ENCODE measurements at regions of chr1 and their contacts with region 1.

Region 1: DNA sequence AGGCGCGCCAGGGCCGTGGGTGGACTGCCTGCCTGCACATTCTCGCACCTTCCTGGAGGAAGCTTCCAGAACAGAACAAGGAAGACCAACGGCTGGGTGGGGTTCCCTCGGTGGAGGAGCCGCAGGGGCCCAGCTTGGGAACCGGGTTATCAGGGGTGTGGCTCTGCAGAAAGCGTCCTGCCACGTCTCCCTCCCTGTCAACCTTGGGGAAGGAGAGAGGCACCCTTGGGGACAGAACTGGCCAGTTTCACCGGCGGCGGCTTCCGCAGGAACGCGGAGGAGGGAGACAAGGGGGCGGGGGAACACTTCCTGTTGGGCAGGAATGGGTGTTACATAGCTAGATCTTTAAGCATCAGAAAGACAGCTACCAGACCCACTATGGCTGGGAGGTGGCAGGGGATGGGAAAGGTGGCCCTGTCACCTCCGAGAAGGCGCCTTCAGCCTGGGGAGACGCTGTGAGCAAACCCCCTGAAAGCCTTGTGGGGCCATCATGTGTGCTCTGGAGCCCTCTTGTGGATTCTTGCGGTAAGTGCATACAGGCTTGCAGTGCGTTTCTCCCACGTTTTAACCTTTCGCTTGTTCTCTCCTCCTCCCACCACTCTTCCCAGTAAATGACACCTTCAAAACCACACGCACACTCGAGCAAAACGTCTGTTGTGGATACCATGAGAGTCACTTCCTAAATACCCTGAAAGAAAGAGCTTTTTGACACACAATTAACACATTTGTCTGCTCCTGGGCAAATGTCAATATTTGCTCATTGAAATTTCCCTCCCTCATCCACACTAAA is 3.8 kb upstream of the PLEKHA6 start:
- DNase-seq: peak; percentile 60 to 82 (median 72)
- H3K4me3 ChIP-seq: peak overlapping the region; percentile 69
- H3K4me3 Mint-ChIP-seq: peak overlapping the region; percentile 22 to 91 (median 80)
- H3K27ac ChIP-seq: peak overlapping the region; percentile 32
- H3K27ac Mint-ChIP-seq: peak overlapping the region in 7 of 8 donors; percentile 49 to 96 (median 88)
- H3K4me1 ChIP-seq: peaks cover 10% of the 10 kb centered on the region
- H3K4me1 Mint-ChIP-seq: peaks cover 2 to 8% (median 6%) of the 10 kb centered on the region in 3 donors
- H3K27me3 ChIP-seq: no peaks in the 10 kb centered on the region
- H3K27me3 Mint-ChIP-seq: peaks cover 2 to 5% of the 10 kb centered on the region in 2 donors

Region 2: DNA sequence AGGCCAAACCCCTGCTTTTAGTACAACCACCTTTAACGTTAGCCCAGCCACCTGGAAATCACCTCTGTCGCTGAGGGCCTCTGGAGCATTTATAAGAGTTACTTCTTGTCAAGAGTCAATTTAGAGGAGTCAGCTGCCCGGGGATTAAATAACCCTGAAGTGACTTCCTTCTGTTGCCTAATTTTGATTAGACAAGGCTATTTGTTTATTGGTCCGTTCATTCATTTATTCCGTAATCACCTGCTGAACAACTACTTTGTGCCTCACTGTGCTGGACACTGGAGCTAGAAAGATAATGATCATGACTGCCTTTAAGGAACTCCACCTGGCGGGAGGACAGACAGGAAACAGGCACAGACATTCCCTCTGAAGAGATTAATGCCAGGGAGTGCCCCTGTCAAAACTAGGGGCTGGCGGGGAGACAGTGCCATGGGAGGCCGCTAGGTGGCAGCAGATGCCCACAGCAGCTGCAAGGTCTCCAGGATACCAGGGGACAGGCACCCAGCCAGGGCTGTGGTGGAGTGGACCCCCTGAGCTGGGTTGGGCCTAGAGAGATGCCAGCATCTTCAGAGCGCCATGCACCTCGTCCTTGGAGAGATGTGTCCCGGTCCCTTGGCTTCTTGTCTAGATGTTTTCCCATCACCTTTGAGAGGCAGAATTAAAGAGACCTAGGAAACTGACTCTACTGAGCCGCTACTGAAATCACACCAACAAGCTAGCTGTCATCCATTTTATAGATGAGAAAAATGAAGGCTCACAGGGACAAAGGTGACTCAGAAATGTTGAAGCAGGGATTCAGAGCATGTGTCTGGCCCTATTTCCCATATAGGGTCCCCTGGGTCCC is 201.1 kb before region 1 on chr1:
- CTCF ChIA-PET with region 1: interaction called, 80 read pairs
- POLR2A ChIA-PET with region 1: no interaction called
- DNase-seq: peak; percentile 63 to 80 (median 72)
- H3K4me3 ChIP-seq: no peak overlapping the region
- H3K4me3 Mint-ChIP-seq: no peak overlapping the region
- H3K27ac ChIP-seq: no peak overlapping the region
- H3K27ac Mint-ChIP-seq: no peak overlapping the region
- H3K4me1 ChIP-seq: no peaks in the 10 kb centered on the region
- H3K4me1 Mint-ChIP-seq: no peaks in the 10 kb centered on the region
- H3K27me3 ChIP-seq: no peaks in the 10 kb centered on the region
- H3K27me3 Mint-ChIP-seq: peaks cover 11 to 24% of the 10 kb centered on the region in 2 donors

Region 3: DNA sequence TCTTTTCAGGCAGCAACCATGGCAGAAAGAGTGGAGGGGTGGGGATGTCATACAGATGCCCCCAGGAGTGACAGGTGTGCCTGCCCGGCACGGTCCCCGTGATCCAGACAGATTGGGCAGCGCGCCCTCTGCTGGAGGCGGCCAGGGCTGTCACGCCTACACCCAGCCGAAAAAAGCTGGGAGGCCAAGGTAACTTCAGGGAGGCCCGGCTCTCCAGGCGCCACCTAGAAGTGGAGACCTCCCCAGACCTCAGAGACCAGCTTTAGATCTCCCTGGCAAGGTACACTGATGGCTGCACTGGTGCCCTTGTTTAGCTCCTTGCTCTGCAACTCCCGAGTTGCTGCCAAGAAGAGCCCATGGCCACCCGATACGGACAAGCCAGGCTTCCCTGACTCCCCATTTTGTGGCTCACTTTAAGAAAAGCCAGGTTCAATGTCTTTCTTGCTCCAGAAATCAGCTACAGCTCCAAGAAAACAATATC is 156.4 kb before region 1 on chr1:
- CTCF ChIA-PET with region 1: interaction called, 14 read pairs
- POLR2A ChIA-PET with region 1: no interaction called
- DNase-seq: peak; percentile 50 to 70 (median 61)
- H3K4me3 ChIP-seq: no peak overlapping the region
- H3K4me3 Mint-ChIP-seq: no peak overlapping the region
- H3K27ac ChIP-seq: no peak overlapping the region
- H3K27ac Mint-ChIP-seq: no peak overlapping the region
- H3K4me1 ChIP-seq: peaks cover 5% of the 10 kb centered on the region
- H3K4me1 Mint-ChIP-seq: peaks cover 0 to 4% (median 0%) of the 10 kb centered on the region in 3 donors
- H3K27me3 ChIP-seq: peaks cover 3% of the 10 kb centered on the region
- H3K27me3 Mint-ChIP-seq: peaks cover 32 to 69% of the 10 kb centered on the region in 2 donors

Region 4: GRCh38 chr1:204257954-204258752 is 105.4 kb before region 1 on chr1:
- CTCF ChIA-PET with region 1: interaction called, 13 read pairs
- POLR2A ChIA-PET with region 1: no interaction called
- DNase-seq: no peak
- H3K4me3 ChIP-seq: no peak overlapping the region
- H3K4me3 Mint-ChIP-seq: no peak overlapping the region
- H3K27ac ChIP-seq: no peak overlapping the region
- H3K27ac Mint-ChIP-seq: no peak overlapping the region
- H3K4me1 ChIP-seq: no peaks in the 10 kb centered on the region
- H3K4me1 Mint-ChIP-seq: no peaks in the 10 kb centered on the region
- H3K27me3 ChIP-seq: no peaks in the 10 kb centered on the region
- H3K27me3 Mint-ChIP-seq: peaks cover 1 to 8% of the 10 kb centered on the region in 2 donors

Region 5: GRCh38 chr1:204350857-204351573 is 12.5 kb before region 1 on chr1:
- CTCF ChIA-PET with region 1: interaction called, 10 read pairs
- POLR2A ChIA-PET with region 1: no interaction called
- DNase-seq: no peak
- H3K4me3 ChIP-seq: no peak overlapping the region
- H3K4me3 Mint-ChIP-seq: no peak overlapping the region
- H3K27ac ChIP-seq: no peak overlapping the region
- H3K27ac Mint-ChIP-seq: peak overlapping the region in 2 of 8 donors; percentile 29 to 74
- H3K4me1 ChIP-seq: no peaks in the 10 kb centered on the region
- H3K4me1 Mint-ChIP-seq: peaks cover 0 to 1% (median 0%) of the 10 kb centered on the region in 3 donors
- H3K27me3 ChIP-seq: no peaks in the 10 kb centered on the region
- H3K27me3 Mint-ChIP-seq: peaks cover 11% of the 10 kb centered on the region in 2 donors

Region 6: GRCh38 chr1:204377795-204378608 is 14.5 kb after region 1 on chr1:
- CTCF ChIA-PET with region 1: interaction called, 18 read pairs
- POLR2A ChIA-PET with region 1: interaction called, 3 read pairs
- DNase-seq: peak; percentile 28 to 59 (median 45)
- H3K4me3 ChIP-seq: peak overlapping the region; percentile 30
- H3K4me3 Mint-ChIP-seq: peak overlapping the region; percentile 82 to 92 (median 85)
- H3K27ac ChIP-seq: no peak overlapping the region
- H3K27ac Mint-ChIP-seq: peak overlapping the region in 5 of 8 donors; percentile 20 to 85 (median 41)
- H3K4me1 ChIP-seq: peaks cover 4% of the 10 kb centered on the region
- H3K4me1 Mint-ChIP-seq: peaks cover 12 to 17% (median 13%) of the 10 kb centered on the region in 3 donors
- H3K27me3 ChIP-seq: no peaks in the 10 kb centered on the region
- H3K27me3 Mint-ChIP-seq: peaks cover 9 to 10% of the 10 kb centered on the region in 2 donors

Measured in CD8-positive, alpha-beta memory T cell (primary cell).